Esophagus muscularis mucosa (tissue), 4 donors: ENCODE measurements at regions of chr11 and their contacts with region 1.

Region 1: DNA sequence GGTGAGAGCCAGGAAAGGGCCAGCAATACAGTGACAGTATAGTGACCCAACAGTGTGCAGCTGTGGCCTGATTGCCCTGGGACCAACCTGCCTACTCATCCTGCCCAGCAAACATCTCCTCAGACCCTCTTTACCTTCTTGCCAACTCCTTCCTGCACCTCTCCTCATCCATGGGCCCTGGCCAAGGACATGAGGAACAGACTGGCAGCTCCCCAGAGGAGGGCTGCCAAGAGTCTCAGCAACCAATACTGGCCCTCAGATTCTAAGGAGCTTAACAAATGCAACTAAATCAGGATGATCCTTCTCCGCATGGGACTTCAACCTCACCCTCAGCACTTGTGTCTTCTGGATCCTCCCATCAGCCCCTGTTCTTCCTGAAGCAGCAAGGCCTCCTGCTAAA is 77.0 kb downstream of the RPL27A start:
- DNase-seq: no peak
- H3K4me3 ChIP-seq: no peak overlapping the region
- H3K27ac ChIP-seq: peak overlapping the region; percentile 85 to 88 (median 86)
- H3K4me1 ChIP-seq: peaks cover 76 to 94% (median 92%) of the 10 kb centered on the region in 4 donors
- H3K27me3 ChIP-seq: no peaks in the 10 kb centered on the region
- CTCF ChIP-seq: no peak
- EP300 ChIP-seq: no peak
- POLR2A ChIP-seq: no peak

Region 2: GRCh38 chr11:8709002-8709672 is 50.5 kb before region 1 on chr11:
- intact Hi-C with region 1: no loop called
- DNase-seq: peak; percentile 97
- H3K4me3 ChIP-seq: peak overlapping the region in 3 of 4 donors; percentile 5 to 35 (median 30)
- H3K27ac ChIP-seq: peak overlapping the region; percentile 90 to 97 (median 93)
- H3K4me1 ChIP-seq: peaks cover 46 to 97% (median 92%) of the 10 kb centered on the region in 4 donors
- H3K27me3 ChIP-seq: no peaks in the 10 kb centered on the region
- CTCF ChIP-seq: no peak
- EP300 ChIP-seq: peak; percentile 76
- POLR2A ChIP-seq: no peak

Region 3: DNA sequence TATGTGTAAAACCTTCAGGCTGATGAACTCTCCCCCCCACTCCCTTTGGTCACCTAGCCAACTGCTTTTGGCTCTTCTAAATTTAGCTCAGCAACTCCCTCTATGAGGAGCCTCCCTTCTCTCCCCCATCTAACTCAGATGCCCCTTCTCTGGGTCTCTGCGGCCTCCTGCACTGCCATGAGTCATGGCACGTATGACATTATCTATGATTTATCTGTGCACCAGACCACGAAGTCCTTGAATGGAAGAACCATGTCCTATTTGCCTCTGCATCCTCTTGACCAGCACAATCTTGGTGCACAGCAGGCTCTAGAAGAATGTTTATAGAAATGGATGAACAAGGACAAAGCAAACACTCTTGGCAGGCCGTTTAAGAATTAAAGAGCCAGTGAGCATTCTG is 31.1 kb before region 1 on chr11:
- intact Hi-C with region 1: loop called (anchors 5 kb)
- DNase-seq: no peak
- H3K4me3 ChIP-seq: no peak overlapping the region
- H3K27ac ChIP-seq: peak overlapping the region; percentile 90 to 97 (median 93)
- H3K4me1 ChIP-seq: peaks cover 67 to 90% (median 89%) of the 10 kb centered on the region in 4 donors
- H3K27me3 ChIP-seq: no peaks in the 10 kb centered on the region
- CTCF ChIP-seq: no peak
- EP300 ChIP-seq: no peak
- POLR2A ChIP-seq: no peak